IMR-90 (cell line): ENCODE measurements at regions of chr15 and their contacts with region 1.

Region 1: DNA sequence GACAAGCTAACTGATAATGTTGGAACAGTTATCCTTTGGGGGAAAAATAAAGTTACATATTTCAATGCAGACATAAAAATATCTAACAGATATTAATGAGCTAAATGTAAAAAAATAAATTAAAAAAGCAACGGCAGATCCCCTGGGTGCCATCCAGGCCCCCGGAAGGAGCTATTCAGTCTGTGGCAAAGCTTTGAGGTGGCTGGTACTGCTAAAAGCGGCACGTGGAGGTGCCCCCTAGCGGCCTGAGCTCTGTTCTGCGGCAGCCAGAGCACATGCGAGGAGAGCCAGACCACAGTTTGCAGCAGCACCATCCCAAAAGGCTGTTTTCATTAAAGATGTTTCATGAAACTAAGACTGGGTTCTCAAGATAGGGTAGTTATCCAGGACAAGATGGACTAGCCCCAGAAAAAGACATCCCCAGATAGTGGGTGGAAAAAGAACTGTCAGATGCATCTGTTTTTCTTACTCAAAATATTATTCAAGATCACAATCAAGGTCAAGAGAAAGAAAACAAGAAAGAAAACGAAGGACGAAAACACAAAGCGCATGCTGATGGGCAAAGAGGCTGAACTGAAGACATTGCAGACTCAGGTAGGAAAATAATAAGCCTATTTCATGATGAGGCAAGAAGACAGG is 18.7 kb downstream of the AP3S2 start:
- DNase-seq: peak; percentile 66
- ATAC-seq: peak; percentile 99
- H3K4me3 ChIP-seq: no peak overlapping the region
- H3K27ac ChIP-seq: no peak overlapping the region
- H3K4me1 ChIP-seq: no peaks in the 10 kb centered on the region
- H3K27me3 ChIP-seq: no peaks in the 10 kb centered on the region
- CTCF ChIP-seq: peak; percentile 90
- POLR2A ChIP-seq: 0 out of 2 replicates have a peak, but pooled peaks have one; percentile 24
- RAD21 ChIP-seq: peak; percentile 91

Region 2: DNA sequence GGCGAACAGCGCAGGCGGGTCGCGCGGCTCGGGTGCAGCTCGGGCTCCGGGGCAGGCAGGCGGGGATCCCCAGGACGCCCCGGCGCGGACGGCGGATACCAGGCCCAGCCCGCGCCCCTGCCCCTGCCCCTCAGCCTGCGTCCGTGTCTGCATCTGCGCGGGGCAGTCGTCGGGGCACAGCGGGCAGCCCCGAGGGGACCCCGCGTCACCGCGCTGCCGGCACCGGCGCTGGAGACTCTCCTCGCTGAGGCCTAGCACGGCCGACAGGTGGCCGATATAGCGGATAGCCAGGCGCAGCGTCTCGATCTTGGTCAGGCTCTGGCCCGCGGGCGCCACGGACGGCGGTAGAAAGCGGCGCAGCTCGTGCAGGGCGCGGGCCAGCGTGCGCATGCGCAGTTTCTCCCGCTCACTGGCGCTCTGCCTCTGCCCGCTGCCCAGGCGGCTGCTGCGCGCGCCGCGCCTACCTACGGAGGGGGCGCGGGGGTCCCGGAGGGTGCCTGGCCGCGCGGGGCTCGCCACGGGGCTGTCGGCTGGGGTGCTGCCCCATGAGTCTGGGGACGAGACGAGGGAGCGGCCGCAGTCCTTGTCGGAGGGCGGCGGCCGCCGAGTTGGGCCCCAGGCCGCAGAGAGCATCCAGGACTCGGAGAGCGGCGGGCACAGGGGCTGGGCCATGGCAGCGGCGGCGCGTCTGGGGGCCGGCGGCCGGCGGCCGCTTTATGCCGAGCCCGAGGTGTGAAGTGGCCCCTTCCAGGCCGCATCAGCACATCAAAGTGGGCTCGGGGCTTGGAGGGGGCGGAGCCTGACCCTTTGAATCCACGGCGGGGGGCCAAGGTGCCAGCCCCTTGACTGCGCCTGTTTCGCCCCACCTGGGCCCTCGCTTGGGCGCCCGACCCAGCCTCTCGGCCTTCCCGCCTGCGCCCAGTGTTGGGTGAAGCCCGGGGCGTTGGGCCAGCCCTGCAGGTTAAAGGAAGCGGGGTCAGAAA is 124.2 kb before region 1 on chr15 and contains the start of gene MESP1:
- CTCF ChIA-PET with region 1: interaction called, 24 read pairs
- POLR2A ChIA-PET with region 1: no interaction called
- dilution Hi-C with region 1: loop called (anchors 25 kb)
- in situ Hi-C with region 1: loop called (anchors 5 kb)
- intact Hi-C with region 1: no loop called
- DNase-seq: peak; percentile 87
- ATAC-seq: peak; percentile 97
- H3K4me3 ChIP-seq: peak within 1 kb of the TSS; percentile 65
- H3K27ac ChIP-seq: peak within 1 kb of the TSS; percentile 19; the same call in 1 of the 2 replicates
- H3K4me1 ChIP-seq: peaks cover 2% of the 10 kb centered on the region; the same call in 1 of the 2 replicates
- H3K27me3 ChIP-seq: peaks cover 33% of the 10 kb centered on the region
- CTCF ChIP-seq: peak; percentile 89
- POLR2A ChIP-seq: no peak
- RAD21 ChIP-seq: peak; percentile 64
- total RNA-seq, gene MESP1: under 0.01 TPM in 1 of 2 replicates, not detected in the other

Region 3: GRCh38 chr15:89760303-89761008 is 114.6 kb before region 1 on chr15:
- CTCF ChIA-PET with region 1: interaction called, 59 read pairs
- POLR2A ChIA-PET with region 1: no interaction called
- dilution Hi-C with region 1: loop called (anchors 25 kb)
- in situ Hi-C with region 1: loop called (anchors 5 kb)
- intact Hi-C with region 1: loop called (anchors 1 kb)
- DNase-seq: peak; percentile 57
- ATAC-seq: peak; percentile 100
- H3K4me3 ChIP-seq: no peak overlapping the region
- H3K27ac ChIP-seq: no peak overlapping the region
- H3K4me1 ChIP-seq: no peaks in the 10 kb centered on the region
- H3K27me3 ChIP-seq: no peaks in the 10 kb centered on the region
- CTCF ChIP-seq: peak; percentile 99
- POLR2A ChIP-seq: 0 out of 2 replicates have a peak, but pooled peaks have one; percentile 42
- RAD21 ChIP-seq: peak; percentile 96

Region 4: GRCh38 chr15:89814112-89814742 is 60.8 kb before region 1 on chr15:
- CTCF ChIA-PET with region 1: no interaction called
- POLR2A ChIA-PET with region 1: no interaction called
- dilution Hi-C with region 1: no loop called
- in situ Hi-C with region 1: no loop called
- intact Hi-C with region 1: loop called (anchors 2 kb)
- DNase-seq: no peak
- ATAC-seq: peak; percentile 19
- H3K4me3 ChIP-seq: peak overlapping the region; percentile 58
- H3K27ac ChIP-seq: 0 out of 2 replicates have a peak overlapping the region, but pooled peaks have one; percentile 6
- H3K4me1 ChIP-seq: peaks cover 17% of the 10 kb centered on the region
- H3K27me3 ChIP-seq: no peaks in the 10 kb centered on the region
- CTCF ChIP-seq: no peak
- POLR2A ChIP-seq: no peak
- RAD21 ChIP-seq: no peak

Region 5: DNA sequence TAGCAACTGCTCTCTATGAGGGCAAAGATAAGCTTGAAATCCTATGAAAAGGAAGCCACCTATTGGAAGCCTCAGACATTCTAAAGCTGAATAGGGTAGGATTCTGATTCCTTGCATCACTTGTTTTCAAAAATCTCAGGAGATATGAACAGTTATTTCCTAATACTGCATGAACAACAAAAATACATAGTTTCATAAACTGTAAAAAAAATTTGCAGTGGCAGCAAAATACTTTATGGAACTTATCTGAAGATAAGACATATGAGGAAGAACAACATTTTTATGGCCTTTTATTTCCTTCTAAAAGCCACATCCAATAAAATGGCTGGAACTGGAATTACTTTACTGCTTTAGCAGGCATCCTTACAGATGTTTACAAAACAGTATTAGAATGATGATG is 11.1 kb before region 1 on chr15:
- CTCF ChIA-PET with region 1: interaction called, 20 read pairs
- POLR2A ChIA-PET with region 1: no interaction called
- dilution Hi-C with region 1: no loop called
- in situ Hi-C with region 1: no loop called
- intact Hi-C with region 1: no loop called
- DNase-seq: no peak
- ATAC-seq: no peak
- H3K4me3 ChIP-seq: no peak overlapping the region
- H3K27ac ChIP-seq: no peak overlapping the region
- H3K4me1 ChIP-seq: peaks cover 2% of the 10 kb centered on the region; the same call in 1 of the 2 replicates
- H3K27me3 ChIP-seq: no peaks in the 10 kb centered on the region
- CTCF ChIP-seq: no peak
- POLR2A ChIP-seq: no peak
- RAD21 ChIP-seq: no peak

Region 6: DNA sequence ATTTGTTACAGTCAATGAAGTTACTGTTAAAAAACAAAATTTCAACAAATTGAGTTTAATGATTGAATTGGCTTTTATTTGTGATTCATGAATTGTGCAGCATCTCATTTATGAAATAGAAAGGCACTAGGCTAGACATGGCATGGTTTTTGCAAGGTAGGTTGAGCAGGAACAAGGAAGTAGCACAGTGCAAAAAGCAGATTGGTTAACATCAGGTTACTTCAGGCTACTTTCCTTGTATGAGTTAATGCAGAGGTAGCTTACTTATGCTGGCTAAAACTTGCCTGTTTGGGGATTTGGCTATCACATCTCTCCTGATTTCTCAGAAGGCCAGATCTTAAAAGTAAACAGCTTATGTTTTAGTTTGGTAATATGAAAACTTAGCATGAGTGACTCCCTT is 1202.0 kb after region 1 on chr15:
- CTCF ChIA-PET with region 1: no interaction called
- POLR2A ChIA-PET with region 1: no interaction called
- dilution Hi-C with region 1: no loop called
- in situ Hi-C with region 1: no loop called
- intact Hi-C with region 1: no loop called
- DNase-seq: no peak
- ATAC-seq: no peak
- H3K4me3 ChIP-seq: no peak overlapping the region
- H3K27ac ChIP-seq: no peak overlapping the region
- H3K4me1 ChIP-seq: no peaks in the 10 kb centered on the region
- H3K27me3 ChIP-seq: no peaks in the 10 kb centered on the region
- CTCF ChIP-seq: no peak
- POLR2A ChIP-seq: no peak
- RAD21 ChIP-seq: no peak